ENCODE measurements at regions of chr7 and their contacts with region 1.

Region 1: GRCh38 chr7:99997545-99998137 is 17.8 kb upstream of the ZKSCAN1 start:
- DNase-seq: peak in 4 of 6 donors; percentile 46 to 71 (median 58)
- ATAC-seq: peak; percentile 12 to 72 (median 62)
- H3K4me3 ChIP-seq: peak overlapping the region in 3 of 4 donors; percentile 7 to 43 (median 22)
- H3K27ac ChIP-seq: peak overlapping the region; percentile 39 to 83 (median 78)
- H3K4me1 ChIP-seq: peaks cover 7 to 22% (median 9%) of the 10 kb centered on the region in 3 donors
- H3K27me3 ChIP-seq: no peaks in the 10 kb centered on the region
- CTCF ChIP-seq: no peak

Region 2: DNA sequence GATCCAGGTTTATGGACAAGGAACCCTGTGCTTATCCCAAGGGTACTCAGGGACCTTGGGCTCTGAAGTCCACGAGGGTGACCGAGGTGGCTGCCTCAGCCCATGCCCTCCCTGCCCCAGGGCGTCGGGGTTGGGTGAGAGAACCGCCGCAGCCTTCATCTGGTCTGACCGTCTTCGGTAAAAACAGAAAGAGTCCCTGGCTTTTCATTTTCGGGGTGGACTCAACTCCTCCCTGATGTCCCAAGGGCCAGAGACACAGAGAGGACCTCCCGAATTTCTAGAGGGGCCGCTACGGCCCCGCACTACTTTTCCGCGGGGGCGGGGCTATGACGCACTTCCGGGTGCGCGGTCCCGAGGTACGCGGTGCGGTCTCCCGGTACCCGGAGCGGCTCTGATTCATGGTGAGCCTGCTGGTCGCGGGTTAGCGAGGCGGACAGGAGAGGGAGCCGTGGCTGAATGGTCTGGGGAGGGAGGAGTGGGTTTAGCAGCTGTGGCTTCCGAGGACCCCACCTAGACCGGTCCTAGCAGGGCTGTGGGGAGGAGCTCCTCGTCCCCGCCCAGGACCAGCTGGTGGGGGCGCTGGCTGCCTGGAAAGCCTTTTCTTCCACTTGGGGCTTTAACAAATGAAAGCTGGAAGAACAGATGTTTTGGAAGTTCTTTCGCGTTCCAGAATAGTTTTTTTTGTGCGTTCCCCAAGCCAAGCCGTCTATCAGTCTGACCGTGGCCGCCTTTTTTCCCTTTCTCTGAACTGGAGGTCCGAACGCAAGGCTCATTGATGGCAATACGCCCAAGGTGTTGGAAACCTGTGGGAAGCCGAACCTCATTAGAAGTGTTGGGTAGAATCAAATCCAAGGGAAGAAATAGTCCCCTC is 52.0 kb after region 1 on chr7 and contains the start of gene ZSCAN21:
- intact Hi-C with region 1: loop called in 1 of 3 experiments (anchors 5 kb)
- DNase-seq: peak; percentile 81 to 93 (median 86)
- ATAC-seq: peak; percentile 90 to 96 (median 91)
- H3K4me3 ChIP-seq: peak within 1 kb of the TSS; percentile 61 to 88 (median 80)
- H3K27ac ChIP-seq: peak within 1 kb of the TSS; percentile 92 to 94 (median 94)
- H3K4me1 ChIP-seq: peaks cover 0 to 10% (median 7%) of the 10 kb centered on the region in 3 donors
- H3K27me3 ChIP-seq: no peaks in the 10 kb centered on the region
- CTCF ChIP-seq: no peak
- total RNA-seq, gene ZSCAN21: 3.8 to 9.6 (median 6.2) TPM

Measured in pancreas (tissue), 10 donors.